Ascending aorta (tissue), 2 donors: ENCODE measurements at regions of chr6 and their contacts with region 1.

Region 1: DNA sequence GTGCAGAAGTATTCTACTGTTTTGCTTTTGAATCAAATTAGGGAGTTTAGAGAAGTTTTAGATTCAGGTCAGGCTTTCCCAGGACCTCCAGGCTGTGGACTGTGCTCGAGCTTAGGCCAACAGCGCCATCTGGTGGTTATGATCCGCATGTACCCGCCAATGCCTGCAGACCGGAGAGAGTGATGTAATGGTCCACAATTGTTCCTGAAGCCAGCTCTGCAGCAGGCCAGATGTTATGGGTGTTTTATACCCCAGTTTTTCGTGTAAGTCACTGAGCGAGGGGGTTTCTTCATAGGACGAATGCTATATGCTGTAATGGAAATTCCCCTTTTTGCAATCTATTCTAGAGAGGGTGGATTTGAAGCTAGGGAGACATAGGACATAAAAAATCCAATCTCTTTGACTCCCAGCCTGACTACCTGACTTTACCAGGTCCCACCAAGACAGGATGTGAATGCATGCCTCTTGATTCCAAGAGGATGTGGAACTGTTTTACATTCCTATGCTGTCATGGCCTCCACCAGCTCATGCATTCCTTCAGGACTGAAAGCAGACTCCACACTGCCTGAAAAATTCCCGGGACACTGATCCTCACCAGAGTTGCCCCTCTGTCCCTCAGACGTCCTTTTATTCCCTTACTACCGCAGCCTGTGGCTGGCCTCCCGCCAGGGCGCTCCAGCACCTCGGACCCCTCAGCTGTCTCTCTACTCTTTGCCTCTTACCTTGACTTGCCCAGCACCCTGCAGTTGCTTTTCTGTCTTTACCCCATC is 41.2 kb upstream of the LY86 start:
- DNase-seq: peak; percentile 48 to 88
- H3K4me3 ChIP-seq: peak overlapping the region; percentile 53 to 67
- H3K27ac ChIP-seq: no peak overlapping the region
- H3K4me1 ChIP-seq: peaks cover 6 to 7% of the 10 kb centered on the region in 2 donors
- H3K27me3 ChIP-seq: no peaks in the 10 kb centered on the region
- CTCF ChIP-seq: peak; percentile 79 to 88 (median 81)

Region 2: GRCh38 chr6:6057424-6058053 is 489.8 kb before region 1 on chr6:
- intact Hi-C with region 1: loop called (anchors 5 kb)
- DNase-seq: no peak
- H3K4me3 ChIP-seq: no peak overlapping the region
- H3K27ac ChIP-seq: no peak overlapping the region
- H3K4me1 ChIP-seq: no peaks in the 10 kb centered on the region
- H3K27me3 ChIP-seq: no peaks in the 10 kb centered on the region
- CTCF ChIP-seq: peak in 1 of 3 experiments; percentile 25

Region 3: DNA sequence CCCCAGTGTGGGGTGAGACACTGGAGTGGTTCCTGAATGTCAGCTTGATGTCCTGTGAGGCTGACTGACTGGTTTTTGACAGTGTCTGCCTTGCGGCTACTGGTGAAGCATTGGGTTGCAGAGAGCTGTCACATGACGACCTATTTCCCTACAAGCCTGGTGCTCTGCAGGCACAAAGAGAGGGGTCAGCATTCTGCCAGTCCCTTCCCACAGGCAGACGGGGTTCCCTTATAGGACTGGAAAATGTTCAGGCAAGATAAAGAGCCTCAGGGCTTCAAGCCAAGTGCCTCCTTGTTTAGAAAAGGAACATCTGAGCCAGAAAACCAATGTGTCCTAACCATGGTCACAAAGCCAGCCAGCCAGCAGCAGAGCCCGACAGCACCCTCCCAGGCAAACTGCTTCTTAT is 52.2 kb after region 1 on chr6:
- intact Hi-C with region 1: no loop called
- DNase-seq: peak in 1 of 2 donors; percentile 27
- H3K4me3 ChIP-seq: no peak overlapping the region
- H3K27ac ChIP-seq: no peak overlapping the region
- H3K4me1 ChIP-seq: no peaks in the 10 kb centered on the region
- H3K27me3 ChIP-seq: no peaks in the 10 kb centered on the region
- CTCF ChIP-seq: no peak